CD14-positive monocyte (primary cell): ENCODE measurements at regions of chr3 and their contacts with region 1.

Region 1: DNA sequence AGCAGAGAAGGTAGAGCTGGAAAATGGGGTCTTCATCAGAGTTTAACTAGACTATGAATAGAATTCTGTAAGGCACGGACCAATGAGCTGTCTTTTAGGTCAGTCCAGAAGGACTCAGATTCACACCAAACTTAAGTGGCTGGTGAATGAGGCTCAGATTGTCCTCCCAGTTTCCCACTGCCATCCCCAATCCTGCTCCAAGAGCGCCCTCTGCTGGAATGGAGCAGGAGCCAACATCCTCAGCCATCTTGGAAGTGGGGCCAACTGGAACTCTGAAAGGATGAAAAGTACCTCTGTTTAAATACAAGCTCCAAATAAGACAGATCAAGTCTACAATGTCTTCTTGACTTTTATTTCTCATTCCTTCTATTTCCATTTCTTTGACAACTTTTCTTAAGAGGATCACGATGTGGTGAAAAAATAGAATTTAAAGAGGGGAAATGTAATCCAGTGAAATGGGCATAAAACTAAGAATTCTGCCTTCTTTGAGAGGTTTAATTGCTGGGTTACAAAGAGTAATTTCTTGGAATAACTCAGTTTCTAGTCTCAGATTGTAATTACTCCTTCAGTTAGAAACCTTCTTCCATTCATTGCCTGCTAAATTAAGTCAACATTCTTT is 217.1 kb upstream of the TPRG1 start:
- DNase-seq: peak; percentile 80 to 87 (median 82)
- H3K4me3 ChIP-seq: no peak overlapping the region
- H3K4me3 Mint-ChIP-seq: no peak overlapping the region
- H3K27ac ChIP-seq: peak overlapping the region in 1 of 2 donors; percentile 6
- H3K27ac Mint-ChIP-seq: peak overlapping the region in 6 of 7 donors; percentile 53 to 74 (median 68)
- H3K4me1 ChIP-seq: peaks cover 36 to 46% of the 10 kb centered on the region in 2 donors
- H3K4me1 Mint-ChIP-seq: peaks cover 47% of the 10 kb centered on the region
- H3K27me3 ChIP-seq: no peaks in the 10 kb centered on the region
- H3K27me3 Mint-ChIP-seq: peaks cover 0 to 2% (median 0%) of the 10 kb centered on the region in 3 donors
- CTCF ChIP-seq: peak; percentile 94

Region 2: GRCh38 chr3:188294823-188295487 is 659.7 kb before region 1 on chr3:
- intact Hi-C with region 1: loop called in 1 of 2 experiments (anchors 5 kb)
- DNase-seq: peak in 1 of 3 donors; percentile 38
- H3K4me3 ChIP-seq: no peak overlapping the region
- H3K4me3 Mint-ChIP-seq: no peak overlapping the region
- H3K27ac ChIP-seq: no peak overlapping the region
- H3K27ac Mint-ChIP-seq: peak overlapping the region; percentile 28 to 79 (median 61)
- H3K4me1 ChIP-seq: peaks cover 58 to 74% of the 10 kb centered on the region in 2 donors
- H3K4me1 Mint-ChIP-seq: peaks cover 72% of the 10 kb centered on the region
- H3K27me3 ChIP-seq: no peaks in the 10 kb centered on the region
- H3K27me3 Mint-ChIP-seq: peaks cover 0 to 2% (median 0%) of the 10 kb centered on the region in 3 donors
- CTCF ChIP-seq: no peak

Region 3: GRCh38 chr3:188432802-188433520 is 521.7 kb before region 1 on chr3:
- intact Hi-C with region 1: loop called (anchors 5 to 10 kb)
- DNase-seq: peak; percentile 75 to 86 (median 80)
- H3K4me3 ChIP-seq: peak overlapping the region in 2 of 3 experiments; percentile 43 to 60
- H3K4me3 Mint-ChIP-seq: peak overlapping the region; percentile 60 to 80
- H3K27ac ChIP-seq: peak overlapping the region; percentile 86 to 94
- H3K27ac Mint-ChIP-seq: peak overlapping the region; percentile 98 to 100 (median 100)
- H3K4me1 ChIP-seq: peaks cover 53 to 79% of the 10 kb centered on the region in 2 donors
- H3K4me1 Mint-ChIP-seq: peaks cover 62% of the 10 kb centered on the region
- H3K27me3 ChIP-seq: no peaks in the 10 kb centered on the region
- H3K27me3 Mint-ChIP-seq: no peaks in the 10 kb centered on the region
- CTCF ChIP-seq: no peak

Region 4: GRCh38 chr3:188693435-188693834 is 261.3 kb before region 1 on chr3:
- intact Hi-C with region 1: loop called in 1 of 2 experiments (anchors 5 kb)
- DNase-seq: no peak
- H3K4me3 ChIP-seq: no peak overlapping the region
- H3K4me3 Mint-ChIP-seq: no peak overlapping the region
- H3K27ac ChIP-seq: no peak overlapping the region
- H3K27ac Mint-ChIP-seq: no peak overlapping the region
- H3K4me1 ChIP-seq: peaks cover 37 to 38% of the 10 kb centered on the region in 2 donors
- H3K4me1 Mint-ChIP-seq: peaks cover 51% of the 10 kb centered on the region
- H3K27me3 ChIP-seq: no peaks in the 10 kb centered on the region
- H3K27me3 Mint-ChIP-seq: no peaks in the 10 kb centered on the region
- CTCF ChIP-seq: no peak

Region 5: DNA sequence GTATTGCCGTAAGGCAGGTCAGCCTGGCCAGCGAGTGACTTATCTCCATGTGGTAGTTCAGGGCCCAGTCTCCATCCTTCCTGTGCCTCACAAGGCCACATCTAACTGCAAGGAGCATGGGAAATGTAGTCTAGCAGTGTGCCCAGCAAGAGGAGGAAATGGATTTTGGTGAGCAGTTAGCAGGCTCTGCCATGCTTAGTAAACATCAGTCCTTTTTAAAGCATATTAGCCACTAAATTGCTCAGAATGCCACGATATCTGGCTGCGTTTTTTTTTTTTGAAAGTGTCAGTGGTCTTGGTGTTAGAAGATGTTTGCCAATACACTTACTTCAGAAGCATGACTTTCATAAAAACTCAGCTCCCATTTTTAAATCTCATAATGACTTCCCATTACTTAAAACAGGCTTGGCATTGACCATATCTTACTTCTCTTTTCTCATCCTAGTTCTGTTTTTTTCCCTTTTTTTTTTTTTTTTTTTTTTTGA is 253.2 kb before region 1 on chr3:
- intact Hi-C with region 1: loop called in 1 of 2 experiments (anchors 10 kb)
- DNase-seq: peak; percentile 72 to 87 (median 77)
- H3K4me3 ChIP-seq: peak overlapping the region in 1 of 3 experiments; percentile 53
- H3K4me3 Mint-ChIP-seq: peak overlapping the region; percentile 73 to 80
- H3K27ac ChIP-seq: peak overlapping the region; percentile 81 to 86
- H3K27ac Mint-ChIP-seq: peak overlapping the region; percentile 90 to 98 (median 97)
- H3K4me1 ChIP-seq: peaks cover 44 to 54% of the 10 kb centered on the region in 2 donors
- H3K4me1 Mint-ChIP-seq: peaks cover 49% of the 10 kb centered on the region
- H3K27me3 ChIP-seq: no peaks in the 10 kb centered on the region
- H3K27me3 Mint-ChIP-seq: peaks cover 0 to 2% (median 0%) of the 10 kb centered on the region in 3 donors
- CTCF ChIP-seq: no peak

Region 6: DNA sequence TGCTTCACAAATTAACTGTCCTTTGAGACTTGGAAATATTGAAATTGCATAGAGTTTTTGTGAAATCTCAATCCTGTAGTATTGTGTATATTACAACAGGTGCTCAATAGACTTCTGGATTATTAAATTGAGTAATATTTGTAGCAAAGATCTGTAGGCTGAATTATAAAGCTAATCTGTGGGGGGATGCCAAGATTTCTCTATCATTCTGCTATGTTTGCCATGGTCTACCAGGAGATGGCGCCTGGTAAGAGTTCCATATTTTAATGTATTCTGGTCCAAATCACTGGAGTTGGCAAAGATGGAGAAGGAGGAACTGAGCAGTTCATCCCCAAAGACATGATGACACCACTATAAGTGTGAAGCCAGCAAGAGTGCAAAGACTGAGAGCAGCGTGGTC is 123.8 kb before region 1 on chr3:
- intact Hi-C with region 1: no loop called
- DNase-seq: peak; percentile 61 to 80 (median 76)
- H3K4me3 ChIP-seq: peak overlapping the region in 1 of 3 experiments; percentile 6
- H3K4me3 Mint-ChIP-seq: no peak overlapping the region
- H3K27ac ChIP-seq: peak overlapping the region in 1 of 2 donors; percentile 52
- H3K27ac Mint-ChIP-seq: peak overlapping the region; percentile 50 to 93 (median 83)
- H3K4me1 ChIP-seq: peaks cover 26 to 28% of the 10 kb centered on the region in 2 donors
- H3K4me1 Mint-ChIP-seq: peaks cover 45% of the 10 kb centered on the region
- H3K27me3 ChIP-seq: no peaks in the 10 kb centered on the region
- H3K27me3 Mint-ChIP-seq: peaks cover 0 to 2% (median 0%) of the 10 kb centered on the region in 3 donors
- CTCF ChIP-seq: peak; percentile 69

Region 7: DNA sequence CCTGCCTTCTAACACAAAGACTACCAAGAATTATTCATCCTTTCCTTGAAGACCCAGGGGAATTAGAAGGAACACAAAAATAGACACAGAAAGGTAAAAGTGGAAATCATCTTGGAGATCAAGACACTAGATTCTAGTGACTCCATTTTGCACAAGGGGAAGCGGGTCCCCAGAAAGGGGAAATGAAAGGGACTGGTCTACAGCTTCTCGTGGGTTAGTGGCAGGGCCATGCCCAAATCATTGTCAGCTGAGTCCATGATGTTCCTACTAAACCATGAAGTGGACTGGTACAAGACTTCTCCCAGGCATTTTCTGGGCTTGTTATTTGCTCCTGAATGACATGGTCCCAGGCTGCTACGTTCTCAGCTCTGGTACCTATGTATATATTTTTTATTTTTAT is 13.6 kb before region 1 on chr3:
- intact Hi-C with region 1: no loop called
- DNase-seq: peak; percentile 85 to 93 (median 91)
- H3K4me3 ChIP-seq: peak overlapping the region in 1 of 3 experiments; percentile 62
- H3K4me3 Mint-ChIP-seq: peak overlapping the region in 1 of 2 donors; percentile 71
- H3K27ac ChIP-seq: peak overlapping the region; percentile 84 to 97
- H3K27ac Mint-ChIP-seq: peak overlapping the region; percentile 94 to 98 (median 97)
- H3K4me1 ChIP-seq: peaks cover 77 to 78% of the 10 kb centered on the region in 2 donors
- H3K4me1 Mint-ChIP-seq: peaks cover 73% of the 10 kb centered on the region
- H3K27me3 ChIP-seq: no peaks in the 10 kb centered on the region
- H3K27me3 Mint-ChIP-seq: peaks cover 0 to 3% (median 0%) of the 10 kb centered on the region in 3 donors
- CTCF ChIP-seq: no peak

Region 8: GRCh38 chr3:188978421-188979171 is 23.9 kb after region 1 on chr3:
- intact Hi-C with region 1: no loop called
- DNase-seq: no peak
- H3K4me3 ChIP-seq: no peak overlapping the region
- H3K4me3 Mint-ChIP-seq: no peak overlapping the region
- H3K27ac ChIP-seq: no peak overlapping the region
- H3K27ac Mint-ChIP-seq: no peak overlapping the region
- H3K4me1 ChIP-seq: peaks cover 16 to 18% of the 10 kb centered on the region in 2 donors
- H3K4me1 Mint-ChIP-seq: peaks cover 19% of the 10 kb centered on the region
- H3K27me3 ChIP-seq: no peaks in the 10 kb centered on the region
- H3K27me3 Mint-ChIP-seq: peaks cover 1 to 2% (median 1%) of the 10 kb centered on the region in 3 donors
- CTCF ChIP-seq: no peak